B cell (primary cell): ENCODE measurements at regions of chr19 and their contacts with region 1.

Region 1: GRCh38 chr19:15379083-15379995 is at the start of gene AKAP8:
- DNase-seq: peak; percentile 99
- ATAC-seq: peak; percentile 91
- H3K4me3 ChIP-seq: peak within 1 kb of the TSS; percentile 87 to 99 (median 94)
- H3K4me3 Mint-ChIP-seq: peak within 1 kb of the TSS; percentile 97
- H3K27ac ChIP-seq: peak within 1 kb of the TSS; percentile 92 to 97
- H3K27ac Mint-ChIP-seq: peak within 1 kb of the TSS; percentile 100
- H3K4me1 ChIP-seq: peaks cover 26 to 27% of the 10 kb centered on the region in 2 donors
- H3K4me1 Mint-ChIP-seq: peaks cover 39% of the 10 kb centered on the region
- H3K27me3 ChIP-seq: no peaks in the 10 kb centered on the region
- H3K27me3 Mint-ChIP-seq: no peaks in the 10 kb centered on the region
- CTCF ChIP-seq: no peak
- total RNA-seq, gene AKAP8: 80.0 and 84.8 TPM in 2 replicates

Region 2: GRCh38 chr19:15264061-15264932 is 115.0 kb before region 1 on chr19:
- CTCF ChIA-PET with region 1: interaction called, 24 read pairs
- POLR2A ChIA-PET with region 1: interaction called, 7 read pairs
- intact Hi-C with region 1: loop called (anchors 1 kb)
- DNase-seq: peak; percentile 82
- ATAC-seq: peak; percentile 67
- H3K4me3 ChIP-seq: no peak overlapping the region
- H3K4me3 Mint-ChIP-seq: no peak overlapping the region
- H3K27ac ChIP-seq: no peak overlapping the region
- H3K27ac Mint-ChIP-seq: no peak overlapping the region
- H3K4me1 ChIP-seq: no peaks in the 10 kb centered on the region
- H3K4me1 Mint-ChIP-seq: peaks cover 2% of the 10 kb centered on the region
- H3K27me3 ChIP-seq: no peaks in the 10 kb centered on the region
- H3K27me3 Mint-ChIP-seq: no peaks in the 10 kb centered on the region
- CTCF ChIP-seq: peak; percentile 90

Region 3: DNA sequence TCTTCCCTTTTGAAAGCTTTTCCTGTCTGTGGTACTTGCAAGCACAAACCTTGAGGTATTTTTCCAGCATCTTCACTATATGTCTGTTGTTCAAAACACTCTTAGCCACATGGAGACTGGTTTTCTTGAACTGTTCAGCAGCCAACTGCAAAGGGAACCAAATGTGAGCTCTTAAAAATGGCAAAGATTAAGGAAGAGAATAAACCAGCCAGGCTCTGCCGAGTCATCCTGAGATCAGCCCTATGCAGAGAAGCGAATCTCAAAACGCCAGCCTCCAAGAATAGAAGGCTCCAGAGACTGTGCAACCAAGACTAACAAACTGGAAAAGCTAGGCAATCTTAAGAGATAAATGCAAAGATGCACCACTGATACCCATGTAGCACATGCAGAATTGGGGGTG is 20.4 kb before region 1 on chr19:
- CTCF ChIA-PET with region 1: no interaction called
- POLR2A ChIA-PET with region 1: interaction called, 7 read pairs
- intact Hi-C with region 1: loop called (anchors 1 kb)
- DNase-seq: no peak
- ATAC-seq: no peak
- H3K4me3 ChIP-seq: no peak overlapping the region
- H3K4me3 Mint-ChIP-seq: no peak overlapping the region
- H3K27ac ChIP-seq: no peak overlapping the region
- H3K27ac Mint-ChIP-seq: no peak overlapping the region
- H3K4me1 ChIP-seq: no peaks in the 10 kb centered on the region
- H3K4me1 Mint-ChIP-seq: no peaks in the 10 kb centered on the region
- H3K27me3 ChIP-seq: no peaks in the 10 kb centered on the region
- H3K27me3 Mint-ChIP-seq: no peaks in the 10 kb centered on the region
- CTCF ChIP-seq: no peak

Region 4: DNA sequence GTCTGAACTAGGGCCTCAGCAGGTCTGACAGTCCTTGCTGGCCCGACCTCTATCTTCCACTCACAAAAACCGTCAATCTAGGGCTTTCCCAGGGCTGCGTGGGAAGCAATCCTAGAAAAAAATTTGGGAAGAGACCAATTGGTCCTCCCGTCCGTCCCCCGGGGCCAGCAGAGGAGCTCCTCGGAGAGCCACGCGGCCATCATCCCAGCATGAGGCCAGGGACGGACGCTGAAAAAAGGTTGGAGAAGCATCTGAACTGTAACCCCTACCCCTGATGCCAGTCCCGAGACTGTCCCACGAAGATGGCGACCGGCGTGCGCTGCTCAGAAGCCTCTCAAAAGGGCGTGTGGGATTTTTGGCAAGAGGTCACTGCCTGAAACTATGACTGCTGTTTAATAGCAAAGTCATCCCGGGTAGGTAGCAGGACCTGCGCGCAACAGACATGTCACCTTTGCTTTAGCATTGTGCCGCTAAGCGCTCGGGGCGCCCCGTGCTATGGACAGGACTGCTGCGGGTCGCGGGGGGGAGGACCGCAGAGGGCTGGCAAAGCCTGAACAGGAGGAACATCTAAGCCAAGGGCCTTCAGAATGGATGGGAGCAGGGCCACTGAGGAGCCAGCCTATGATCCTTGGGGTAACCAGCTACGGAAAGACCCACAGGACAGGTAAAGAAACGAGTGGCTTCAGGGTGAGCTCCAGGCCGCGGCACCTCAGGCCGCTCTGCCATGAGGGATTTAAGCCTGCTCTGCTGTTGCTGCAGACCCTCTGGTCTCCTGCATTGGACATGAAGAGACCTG is 10.3 kb before region 1 on chr19:
- CTCF ChIA-PET with region 1: no interaction called
- POLR2A ChIA-PET with region 1: no interaction called
- intact Hi-C with region 1: no loop called
- DNase-seq: no peak
- ATAC-seq: no peak
- H3K4me3 ChIP-seq: no peak overlapping the region
- H3K4me3 Mint-ChIP-seq: no peak overlapping the region
- H3K27ac ChIP-seq: no peak overlapping the region
- H3K27ac Mint-ChIP-seq: no peak overlapping the region
- H3K4me1 ChIP-seq: no peaks in the 10 kb centered on the region
- H3K4me1 Mint-ChIP-seq: no peaks in the 10 kb centered on the region
- H3K27me3 ChIP-seq: no peaks in the 10 kb centered on the region
- H3K27me3 Mint-ChIP-seq: no peaks in the 10 kb centered on the region
- CTCF ChIP-seq: no peak

Region 5: DNA sequence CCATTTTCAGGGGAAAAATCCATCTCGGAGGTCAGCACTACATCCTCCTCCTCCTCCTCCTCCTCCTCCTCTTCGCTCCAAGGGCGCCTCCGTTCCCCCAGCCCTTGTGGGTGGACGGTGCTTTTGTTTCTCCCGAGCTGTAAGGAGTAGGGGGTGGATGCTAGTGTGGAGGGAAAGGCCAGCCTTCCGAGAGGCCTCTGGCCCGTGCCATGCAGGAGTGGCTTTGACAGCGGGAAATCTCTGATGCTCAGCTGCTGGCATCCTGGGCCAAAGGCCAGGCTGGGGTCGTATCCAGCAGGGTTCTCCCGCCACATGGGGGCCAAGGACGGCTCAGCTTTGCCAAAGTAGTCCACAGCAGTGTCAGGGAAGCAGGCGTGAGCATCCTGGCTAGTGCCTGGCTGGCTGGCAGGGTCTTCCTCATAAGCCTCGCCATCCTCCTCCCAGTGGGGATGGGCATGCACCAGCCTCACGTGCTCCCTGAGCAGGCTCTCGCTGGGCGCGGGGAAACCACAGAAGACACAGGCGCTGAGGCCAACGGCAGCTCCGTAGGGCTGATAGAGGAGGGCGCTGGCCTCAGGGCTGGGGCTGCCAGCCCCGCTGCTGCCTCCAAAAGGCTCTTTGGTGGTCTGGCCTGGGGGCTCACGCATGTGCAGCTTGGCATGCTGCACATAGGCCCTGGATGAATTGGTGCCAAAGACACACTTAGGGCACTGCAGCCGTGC is 59.9 kb after region 1 on chr19:
- CTCF ChIA-PET with region 1: no interaction called
- POLR2A ChIA-PET with region 1: no interaction called
- intact Hi-C with region 1: no loop called
- DNase-seq: no peak
- ATAC-seq: no peak
- H3K4me3 ChIP-seq: no peak overlapping the region
- H3K4me3 Mint-ChIP-seq: no peak overlapping the region
- H3K27ac ChIP-seq: no peak overlapping the region
- H3K27ac Mint-ChIP-seq: no peak overlapping the region
- H3K4me1 ChIP-seq: no peaks in the 10 kb centered on the region
- H3K4me1 Mint-ChIP-seq: no peaks in the 10 kb centered on the region
- H3K27me3 ChIP-seq: no peaks in the 10 kb centered on the region
- H3K27me3 Mint-ChIP-seq: no peaks in the 10 kb centered on the region
- CTCF ChIP-seq: no peak